ENCODE measurements at regions of chr10 and their contacts with region 1.

Region 1: DNA sequence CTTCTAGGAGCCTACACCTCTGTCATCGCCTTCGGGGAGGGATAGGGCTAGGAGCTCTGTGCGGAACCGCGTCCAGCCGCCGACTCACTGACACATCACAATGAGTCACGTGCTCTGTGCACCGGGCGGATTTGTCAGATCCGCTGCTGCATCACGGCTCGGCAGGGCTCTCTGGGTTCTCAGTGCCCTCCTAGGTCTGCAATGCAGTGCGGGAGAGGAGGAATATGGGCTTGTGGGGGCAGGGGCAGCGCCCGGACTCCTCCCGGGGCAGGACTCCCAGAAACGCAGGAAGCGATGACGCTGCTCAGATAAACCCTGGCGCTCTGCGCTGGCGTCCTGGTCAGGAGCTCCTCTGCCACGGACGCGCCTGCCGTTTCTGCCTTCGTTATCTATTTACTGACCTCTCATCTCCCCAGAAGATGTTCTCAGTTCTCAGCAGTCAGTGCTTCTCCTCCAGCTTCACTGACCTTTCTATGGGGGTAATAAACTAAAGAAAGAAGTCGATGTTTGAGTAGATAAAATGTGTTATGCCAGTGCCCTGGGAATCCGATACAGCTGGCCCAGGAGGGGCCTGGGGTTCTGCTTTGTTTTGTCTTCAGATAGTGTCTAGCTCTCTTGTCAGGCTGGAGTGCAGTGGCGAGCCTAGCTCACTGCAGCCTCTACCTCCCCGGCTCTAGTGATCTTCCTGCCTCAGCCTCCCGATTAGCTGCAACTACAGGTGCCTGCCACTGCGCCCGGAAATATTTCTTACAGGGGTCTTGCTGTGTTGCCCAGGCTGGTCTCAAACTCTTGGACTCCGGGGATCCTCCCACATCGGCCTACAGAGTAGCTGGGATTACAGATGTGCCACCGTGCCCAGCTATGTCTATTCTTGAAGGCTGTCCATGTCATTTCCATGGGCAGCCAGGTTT is 22.8 kb upstream of the ITGB1 start:
- DNase-seq: peak; percentile 80 to 89
- ATAC-seq: peak; percentile 76 to 90 (median 81)
- H3K4me3 ChIP-seq: peak overlapping the region; percentile 63
- H3K4me3 Mint-ChIP-seq: peak overlapping the region; percentile 95
- H3K27ac ChIP-seq: peak overlapping the region; percentile 91
- H3K27ac Mint-ChIP-seq: peak overlapping the region; percentile 98 to 99
- H3K4me1 ChIP-seq: peaks cover 51% of the 10 kb centered on the region
- H3K4me1 Mint-ChIP-seq: peaks cover 40 to 44% of the 10 kb centered on the region in 2 donors
- H3K27me3 ChIP-seq: no peaks in the 10 kb centered on the region
- H3K27me3 Mint-ChIP-seq: no peaks in the 10 kb centered on the region
- CTCF ChIP-seq: no peak

Region 2: GRCh38 chr10:32943854-32944661 is 36.8 kb before region 1 on chr10:
- intact Hi-C with region 1: loop called (anchors 5 kb)
- DNase-seq: no peak
- ATAC-seq: no peak
- H3K4me3 ChIP-seq: no peak overlapping the region
- H3K4me3 Mint-ChIP-seq: no peak overlapping the region
- H3K27ac ChIP-seq: no peak overlapping the region
- H3K27ac Mint-ChIP-seq: peak overlapping the region; percentile 41 to 72
- H3K4me1 ChIP-seq: peaks cover 38% of the 10 kb centered on the region
- H3K4me1 Mint-ChIP-seq: peaks cover 67 to 72% of the 10 kb centered on the region in 2 donors
- H3K27me3 ChIP-seq: no peaks in the 10 kb centered on the region
- H3K27me3 Mint-ChIP-seq: no peaks in the 10 kb centered on the region
- CTCF ChIP-seq: no peak

Region 3: GRCh38 chr10:32958085-32959005 is 22.5 kb before region 1 on chr10 and contains the start of gene ITGB1:
- intact Hi-C with region 1: loop called (anchors 1 kb)
- DNase-seq: peak; percentile 85 to 90
- ATAC-seq: peak; percentile 88 to 95 (median 93)
- H3K4me3 ChIP-seq: peak within 1 kb of the TSS; percentile 64
- H3K4me3 Mint-ChIP-seq: peak within 1 kb of the TSS; percentile 94
- H3K27ac ChIP-seq: peak within 1 kb of the TSS; percentile 63
- H3K27ac Mint-ChIP-seq: peak within 1 kb of the TSS; percentile 86 to 94
- H3K4me1 ChIP-seq: peaks cover 27% of the 10 kb centered on the region
- H3K4me1 Mint-ChIP-seq: peaks cover 44 to 47% of the 10 kb centered on the region in 2 donors
- H3K27me3 ChIP-seq: no peaks in the 10 kb centered on the region
- H3K27me3 Mint-ChIP-seq: no peaks in the 10 kb centered on the region
- CTCF ChIP-seq: no peak
- total RNA-seq, gene ITGB1: 175 to 280 (median 202) TPM

Region 4: DNA sequence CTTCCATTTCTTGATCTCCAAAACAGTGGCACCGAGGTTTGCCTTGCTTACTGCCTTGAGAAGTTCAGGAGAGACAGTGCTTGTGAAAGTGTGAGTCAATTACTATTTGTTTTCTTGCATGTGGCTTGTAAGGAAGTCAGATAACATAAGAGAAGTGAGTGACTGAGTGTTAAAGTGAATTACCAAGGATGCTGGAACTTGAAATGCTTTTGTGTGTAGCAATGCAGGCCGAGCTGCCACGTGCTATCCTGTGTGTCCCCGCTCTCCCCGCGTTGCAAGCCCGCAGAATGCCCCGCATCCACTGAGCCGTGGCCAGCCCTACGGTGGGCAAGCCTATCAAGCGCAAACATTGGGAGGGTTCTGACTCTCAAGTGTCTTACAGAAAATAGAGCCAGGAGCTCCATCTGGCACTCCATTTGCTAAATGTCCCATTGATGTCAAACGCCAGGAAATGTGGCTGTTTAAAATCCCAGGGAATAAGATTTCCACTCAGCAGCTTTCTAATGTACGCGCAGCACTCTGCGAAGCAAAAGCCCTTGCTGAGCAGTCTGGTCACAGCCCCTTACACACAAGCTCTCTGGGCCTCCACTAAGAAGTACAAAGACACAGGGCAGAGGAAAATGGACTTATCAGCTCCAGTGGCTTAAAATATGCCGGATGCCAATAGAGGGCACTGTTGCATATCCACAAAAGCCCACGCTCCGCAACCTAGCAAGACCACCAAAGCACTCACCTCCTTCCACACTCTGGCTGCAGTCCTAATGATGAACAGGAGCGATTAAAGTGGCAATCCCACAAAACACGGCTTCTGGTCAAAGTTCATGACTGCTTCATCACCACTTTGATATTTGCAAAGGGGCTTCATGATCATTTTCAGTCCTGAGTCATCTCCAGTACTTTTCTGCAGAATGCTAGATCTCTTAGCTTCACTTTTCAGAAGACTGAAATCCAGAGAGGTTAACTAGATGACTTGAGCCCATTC is 135.2 kb after region 1 on chr10:
- intact Hi-C with region 1: loop called (anchors 5 kb)
- DNase-seq: peak in 1 of 2 donors; percentile 73
- ATAC-seq: no peak
- H3K4me3 ChIP-seq: no peak overlapping the region
- H3K4me3 Mint-ChIP-seq: peak overlapping the region; percentile 31
- H3K27ac ChIP-seq: no peak overlapping the region
- H3K27ac Mint-ChIP-seq: peak overlapping the region; percentile 35 to 93
- H3K4me1 ChIP-seq: peaks cover 63% of the 10 kb centered on the region
- H3K4me1 Mint-ChIP-seq: peaks cover 90 to 91% of the 10 kb centered on the region in 2 donors
- H3K27me3 ChIP-seq: no peaks in the 10 kb centered on the region
- H3K27me3 Mint-ChIP-seq: no peaks in the 10 kb centered on the region
- CTCF ChIP-seq: no peak

Region 5: DNA sequence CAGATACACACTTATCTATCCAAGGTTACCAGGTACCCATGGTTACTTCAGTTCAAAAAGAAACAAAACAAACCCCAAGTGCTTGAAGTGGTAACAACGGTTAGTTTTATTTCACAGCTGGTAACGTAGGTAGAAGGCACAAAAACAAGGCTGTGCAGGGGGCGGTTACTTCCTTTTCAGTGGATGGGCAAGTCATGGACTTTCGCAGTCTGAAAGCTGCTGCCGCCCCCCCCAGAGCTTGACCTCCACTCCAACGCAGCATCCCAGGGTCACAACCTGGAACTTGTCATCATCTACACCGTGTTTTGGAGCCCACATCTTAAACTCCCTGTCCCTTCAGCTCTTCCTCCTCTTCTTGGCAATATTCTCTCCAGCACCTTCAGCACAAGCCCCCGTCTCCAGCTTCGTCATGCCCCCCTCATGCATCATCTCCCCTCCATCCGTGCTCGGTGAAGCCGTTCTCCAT is 158.4 kb after region 1 on chr10:
- intact Hi-C with region 1: loop called (anchors 2 kb)
- DNase-seq: peak; percentile 60 to 95
- ATAC-seq: peak; percentile 78 to 94 (median 84)
- H3K4me3 ChIP-seq: no peak overlapping the region
- H3K4me3 Mint-ChIP-seq: peak overlapping the region; percentile 38
- H3K27ac ChIP-seq: peak overlapping the region; percentile 66
- H3K27ac Mint-ChIP-seq: peak overlapping the region; percentile 75 to 88
- H3K4me1 ChIP-seq: peaks cover 55% of the 10 kb centered on the region
- H3K4me1 Mint-ChIP-seq: peaks cover 44 to 51% of the 10 kb centered on the region in 2 donors
- H3K27me3 ChIP-seq: no peaks in the 10 kb centered on the region
- H3K27me3 Mint-ChIP-seq: no peaks in the 10 kb centered on the region
- CTCF ChIP-seq: no peak

Measured in natural killer cell (primary cell).